BJ (cell line): ENCODE measurements at regions of chr9 and their contacts with region 1.

Region 1: DNA sequence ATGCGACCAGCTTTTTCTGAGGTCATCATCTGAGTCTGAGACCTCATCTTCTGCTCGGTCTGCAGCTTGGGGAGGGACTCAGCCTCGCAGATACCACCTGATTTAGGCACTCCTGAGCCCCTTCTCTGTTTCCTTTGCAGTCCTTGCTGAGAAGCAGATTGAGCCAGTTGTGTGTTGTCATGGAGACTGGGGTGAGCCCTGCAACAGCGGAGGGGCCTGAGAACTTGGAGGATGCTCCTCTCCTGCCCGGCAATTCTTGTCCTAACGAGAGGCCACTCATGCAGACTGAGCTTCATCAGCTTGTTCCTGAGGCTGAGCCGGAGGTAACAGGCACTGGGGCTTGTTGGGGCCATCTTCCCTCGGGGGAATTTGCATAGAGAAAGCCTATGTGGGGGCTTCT is 19.2 kb downstream of the TEX53 start:
- DNase-seq: no peak
- H3K4me3 ChIP-seq: no peak overlapping the region
- H3K27me3 ChIP-seq: no peaks in the 10 kb centered on the region
- CTCF ChIP-seq: no peak

Region 2: DNA sequence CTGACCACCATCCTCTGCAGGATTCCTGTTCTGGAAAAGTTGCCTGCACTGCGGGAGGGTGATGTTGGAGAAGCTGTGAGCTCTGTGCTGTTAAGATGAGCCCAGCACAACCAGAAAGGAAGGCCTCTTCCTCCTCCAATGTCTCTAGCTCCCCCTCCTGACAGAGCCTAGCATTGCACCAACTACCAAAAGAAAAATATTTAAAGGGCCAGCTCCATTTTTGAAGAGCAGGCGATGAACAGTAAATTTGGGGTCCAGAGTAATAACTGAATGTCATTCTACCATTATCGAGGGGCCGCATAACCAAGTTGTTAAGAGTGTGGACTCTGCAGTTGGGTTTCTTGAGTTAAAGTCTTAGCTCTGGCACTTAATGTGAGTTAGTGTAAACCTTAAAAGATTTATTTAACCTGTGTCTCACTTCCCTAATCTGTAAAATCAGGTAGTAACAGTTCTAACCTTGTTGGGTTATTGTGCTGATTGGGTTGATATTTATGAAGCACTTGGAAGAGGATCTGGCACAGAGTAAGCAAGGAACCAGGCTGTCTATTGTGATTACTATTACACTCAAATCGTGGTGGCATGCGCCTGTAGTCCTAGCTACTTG is 15.3 kb after region 1 on chr9:
- CTCF ChIA-PET with region 1: interaction called, 21 read pairs
- POLR2A ChIA-PET with region 1: no interaction called
- DNase-seq: peak; percentile 25
- H3K4me3 ChIP-seq: no peak overlapping the region
- H3K27me3 ChIP-seq: no peaks in the 10 kb centered on the region
- CTCF ChIP-seq: peak; percentile 96

Region 3: GRCh38 chr9:114852050-114852594 is 213.7 kb after region 1 on chr9:
- CTCF ChIA-PET with region 1: no interaction called
- POLR2A ChIA-PET with region 1: no interaction called
- DNase-seq: no peak
- H3K4me3 ChIP-seq: no peak overlapping the region
- H3K27me3 ChIP-seq: no peaks in the 10 kb centered on the region
- CTCF ChIP-seq: no peak

Region 4: GRCh38 chr9:114869845-114870244 is 231.4 kb after region 1 on chr9:
- CTCF ChIA-PET with region 1: no interaction called
- POLR2A ChIA-PET with region 1: no interaction called
- DNase-seq: no peak
- H3K4me3 ChIP-seq: no peak overlapping the region
- H3K27me3 ChIP-seq: no peaks in the 10 kb centered on the region
- CTCF ChIP-seq: no peak